ENCODE measurements at regions of chr10 and their contacts with region 1.

Region 1: GRCh38 chr10:114103284-114103683 is 59.6 kb downstream of the ADRB1 start:
- DNase-seq: peak in 3 of 4 experiments; percentile 9 to 29 (median 21)
- ATAC-seq: peak; percentile 76
- H3K4me3 ChIP-seq: no peak overlapping the region
- H3K27ac ChIP-seq: no peak overlapping the region
- H3K4me1 ChIP-seq: peaks cover 7 to 9% of the 10 kb centered on the region in 2 experiments; a peak in 4 of 5 replicates
- H3K27me3 ChIP-seq: peaks cover 12 to 19% of the 10 kb centered on the region in 2 experiments; a peak in 4 of 5 replicates
- CTCF ChIP-seq: peak in 2 of 3 experiments; percentile 37 to 59; a peak in 5 of 6 replicates
- EP300 ChIP-seq: no peak
- POLR2A ChIP-seq: no peak
- RAD21 ChIP-seq: peak; percentile 72 to 76

Region 2: DNA sequence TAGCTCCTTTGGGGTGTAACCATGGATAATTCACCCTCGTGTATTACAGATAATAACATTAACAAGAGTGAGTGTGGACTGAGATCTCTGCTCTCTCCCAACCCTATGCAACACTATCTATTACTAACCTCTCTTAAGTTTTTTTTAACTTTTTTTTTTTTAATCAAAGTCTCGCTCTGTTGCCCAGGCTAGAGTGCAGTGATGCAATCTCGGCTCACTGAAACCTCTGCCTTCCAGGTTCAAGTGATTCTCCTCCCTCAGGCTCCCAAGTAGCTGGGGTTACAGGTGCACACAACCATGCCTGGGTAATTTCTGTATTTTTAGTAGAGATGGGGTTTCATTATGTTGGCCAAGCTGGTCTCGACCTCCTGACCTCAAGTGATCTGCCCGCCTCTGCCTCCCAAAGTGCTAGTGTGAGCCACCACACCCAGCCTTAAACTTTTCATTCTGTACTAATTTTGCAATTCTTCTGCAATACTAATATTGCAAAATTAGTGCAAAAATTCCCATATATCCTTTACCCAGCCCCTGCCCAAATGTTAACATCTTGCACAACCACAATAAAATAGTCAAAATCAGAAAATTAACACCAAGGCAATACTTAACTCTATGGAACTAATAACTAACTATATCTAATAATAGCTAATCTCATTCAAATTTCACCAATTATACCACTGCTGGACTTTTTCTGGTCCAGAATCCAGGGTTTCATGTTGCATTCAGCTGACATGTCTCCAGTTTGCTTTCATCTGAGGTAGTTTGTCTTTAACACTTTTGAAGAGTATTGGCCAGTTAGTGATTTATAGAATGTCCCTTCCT is 1219.7 kb before region 1 on chr10:
- CTCF ChIA-PET with region 1: no interaction called
- POLR2A ChIA-PET with region 1: no interaction called
- in situ Hi-C with region 1: no loop called
- intact Hi-C with region 1: no loop called
- DNase-seq: no peak
- ATAC-seq: no peak
- H3K4me3 ChIP-seq: no peak overlapping the region
- H3K27ac ChIP-seq: no peak overlapping the region
- H3K4me1 ChIP-seq: no peaks in the 10 kb centered on the region
- H3K27me3 ChIP-seq: no peaks in the 10 kb centered on the region
- CTCF ChIP-seq: no peak
- EP300 ChIP-seq: no peak
- POLR2A ChIP-seq: no peak
- RAD21 ChIP-seq: no peak

Region 3: GRCh38 chr10:113704637-113705343 is 398.5 kb before region 1 on chr10:
- CTCF ChIA-PET with region 1: interaction called, 8 read pairs
- POLR2A ChIA-PET with region 1: no interaction called
- in situ Hi-C with region 1: loop called (anchors 10 kb)
- intact Hi-C with region 1: loop called (anchors 2 kb)
- DNase-seq: peak; percentile 13 to 45 (median 14)
- ATAC-seq: peak; percentile 84
- H3K4me3 ChIP-seq: no peak overlapping the region
- H3K27ac ChIP-seq: no peak overlapping the region
- H3K4me1 ChIP-seq: no peaks in the 10 kb centered on the region
- H3K27me3 ChIP-seq: peaks cover 0 to 12% of the 10 kb centered on the region in 2 experiments; a peak in 1 of 5 replicates
- CTCF ChIP-seq: peak; percentile 24 to 53 (median 51); a peak in 4 of 6 replicates
- EP300 ChIP-seq: no peak
- POLR2A ChIP-seq: no peak
- RAD21 ChIP-seq: peak; percentile 53 to 61

Region 4: DNA sequence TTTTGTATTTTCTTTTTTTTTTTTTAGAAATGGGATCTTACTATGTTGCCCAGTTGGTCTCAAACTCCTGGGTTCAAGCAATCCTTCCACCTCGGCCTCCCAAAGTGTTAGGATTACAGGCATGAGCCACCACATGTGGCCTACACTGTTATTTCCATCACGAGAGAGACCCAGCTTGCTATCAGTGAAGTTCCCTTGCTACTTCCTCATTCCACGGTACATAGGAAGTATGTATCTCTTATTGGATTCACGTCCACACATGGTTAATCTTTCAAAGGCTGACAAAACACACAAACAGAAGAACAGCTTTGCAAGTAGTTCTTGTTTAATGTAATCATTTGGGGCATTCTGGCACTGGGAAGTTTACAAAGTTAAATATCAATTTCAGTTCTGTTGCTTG is 300.3 kb before region 1 on chr10:
- CTCF ChIA-PET with region 1: interaction called, 9 read pairs
- POLR2A ChIA-PET with region 1: no interaction called
- in situ Hi-C with region 1: loop called (anchors 5 kb)
- intact Hi-C with region 1: loop called (anchors 1 kb)
- DNase-seq: no peak
- ATAC-seq: peak; percentile 57; the same call in 2 of the 3 replicates
- H3K4me3 ChIP-seq: no peak overlapping the region
- H3K27ac ChIP-seq: no peak overlapping the region
- H3K4me1 ChIP-seq: no peaks in the 10 kb centered on the region; a peak in 1 of 5 replicates
- H3K27me3 ChIP-seq: no peaks in the 10 kb centered on the region; a peak in 1 of 5 replicates
- CTCF ChIP-seq: no peak
- EP300 ChIP-seq: no peak
- POLR2A ChIP-seq: no peak
- RAD21 ChIP-seq: no peak

Region 5: GRCh38 chr10:113922787-113923570 is 180.3 kb before region 1 on chr10:
- CTCF ChIA-PET with region 1: no interaction called
- POLR2A ChIA-PET with region 1: no interaction called
- in situ Hi-C with region 1: no loop called
- intact Hi-C with region 1: loop called (anchors 10 kb)
- DNase-seq: no peak
- ATAC-seq: no peak
- H3K4me3 ChIP-seq: no peak overlapping the region
- H3K27ac ChIP-seq: no peak overlapping the region
- H3K4me1 ChIP-seq: no peaks in the 10 kb centered on the region
- H3K27me3 ChIP-seq: no peaks in the 10 kb centered on the region
- CTCF ChIP-seq: peak in 1 of 3 experiments; percentile 21; a peak in 2 of 6 replicates
- EP300 ChIP-seq: no peak
- POLR2A ChIP-seq: no peak
- RAD21 ChIP-seq: no peak